ENCODE measurements at regions of chr4 and their contacts with region 1.

Region 1: DNA sequence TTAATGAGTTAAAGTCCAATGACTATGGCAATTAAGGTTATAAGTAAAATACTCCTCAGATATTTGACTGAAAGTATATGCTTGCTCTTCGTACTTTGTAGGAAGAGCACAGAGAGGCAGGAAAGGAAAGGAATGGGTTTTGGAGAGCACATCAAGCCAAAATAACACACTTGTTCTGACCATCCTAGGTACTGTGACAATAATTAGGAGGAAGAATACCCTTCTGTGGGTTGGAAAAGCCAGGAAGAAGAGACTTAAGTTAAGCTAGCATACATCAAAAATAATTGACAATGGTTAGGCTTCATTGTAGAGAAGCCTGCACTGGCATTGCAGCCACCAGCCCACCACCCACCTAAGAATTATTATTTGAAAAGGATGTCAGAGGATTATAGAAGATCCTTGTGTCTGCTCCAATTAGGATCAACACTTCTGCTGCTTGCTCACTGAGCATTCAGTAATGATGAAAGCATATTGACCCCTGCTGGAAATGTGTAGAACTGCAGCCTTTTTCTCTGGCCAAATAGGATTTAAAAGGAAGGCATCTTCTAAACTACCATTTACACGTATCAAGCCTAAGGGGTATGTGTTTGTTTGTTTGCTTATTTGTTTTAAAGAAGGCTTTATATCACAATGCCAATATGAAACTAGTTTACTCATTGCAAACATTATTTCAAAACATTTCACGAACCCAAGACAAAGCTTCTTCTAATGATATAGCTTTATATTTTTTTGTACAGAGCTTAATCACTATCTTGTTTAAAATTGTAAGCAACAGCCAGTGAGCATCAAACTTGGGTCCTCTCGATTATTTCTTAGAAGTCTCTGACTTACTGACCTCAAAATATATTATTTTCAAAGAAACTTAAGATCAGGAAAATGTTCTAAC is 286.2 kb upstream of the TET2 start:
- H3K4me3 Mint-ChIP-seq: no peak overlapping the region
- H3K27ac Mint-ChIP-seq: no peak overlapping the region
- H3K4me1 Mint-ChIP-seq: peaks cover 5% of the 10 kb centered on the region
- H3K27me3 Mint-ChIP-seq: no peaks in the 10 kb centered on the region

Region 2: DNA sequence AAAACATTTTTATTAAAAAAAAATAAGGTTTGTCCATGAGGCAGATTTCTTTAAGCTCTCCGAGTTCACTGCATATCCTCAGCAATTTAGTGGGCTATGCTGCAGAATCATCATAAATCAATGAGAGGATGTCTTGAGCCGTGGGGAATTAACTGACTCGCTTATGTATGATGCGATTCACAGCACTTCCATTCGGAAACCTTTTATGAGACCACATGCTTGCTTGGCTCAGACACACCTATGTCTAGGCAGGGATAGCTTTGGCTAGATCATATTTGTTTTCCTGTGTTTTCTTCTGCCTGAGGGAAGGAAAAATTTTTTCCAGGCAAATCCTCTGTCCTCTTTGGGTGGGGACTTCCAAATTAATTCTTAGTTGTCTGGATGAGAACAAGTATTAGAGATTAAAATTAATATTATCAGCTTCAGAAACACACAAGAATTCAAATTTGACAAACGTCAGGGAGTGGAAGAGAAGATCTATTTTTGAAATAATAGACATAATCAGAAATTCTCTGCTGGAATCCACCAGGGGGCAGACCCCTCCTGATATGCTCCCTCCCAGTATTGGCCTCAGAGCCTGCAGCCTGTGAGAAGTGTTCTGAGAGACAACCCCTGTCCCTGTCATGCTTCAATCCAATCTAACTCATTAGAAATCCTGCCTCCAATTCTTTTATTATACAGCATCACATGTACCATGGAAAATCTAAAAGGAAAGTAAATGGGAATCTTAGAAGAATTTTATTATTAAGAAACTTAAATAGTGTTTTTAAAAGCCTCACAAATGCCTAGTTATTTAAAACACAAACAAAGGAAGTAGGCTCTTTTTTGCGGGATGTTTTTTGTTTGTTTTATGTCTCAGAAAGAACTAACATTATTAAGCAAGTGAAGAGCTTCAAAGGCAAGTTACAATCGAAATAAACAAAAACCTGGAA is 795.6 kb before region 1 on chr4:
- intact Hi-C with region 1: loop called (anchors 5 kb)
- H3K4me3 Mint-ChIP-seq: no peak overlapping the region
- H3K27ac Mint-ChIP-seq: no peak overlapping the region
- H3K4me1 Mint-ChIP-seq: no peaks in the 10 kb centered on the region
- H3K27me3 Mint-ChIP-seq: no peaks in the 10 kb centered on the region

Region 3: GRCh38 chr4:104693599-104694201 is 166.8 kb before region 1 on chr4:
- intact Hi-C with region 1: loop called (anchors 2 kb)
- H3K4me3 Mint-ChIP-seq: no peak overlapping the region
- H3K27ac Mint-ChIP-seq: no peak overlapping the region
- H3K4me1 Mint-ChIP-seq: no peaks in the 10 kb centered on the region
- H3K27me3 Mint-ChIP-seq: no peaks in the 10 kb centered on the region